ENCODE measurements at regions of chr1 and their contacts with region 1.

Region 1: GRCh38 chr1:239976130-239976968 is 115.3 kb upstream of the FMN2 start:
- DNase-seq: peak; percentile 62
- H3K4me3 Mint-ChIP-seq: no peak overlapping the region
- H3K27ac Mint-ChIP-seq: no peak overlapping the region
- H3K4me1 Mint-ChIP-seq: no peaks in the 10 kb centered on the region
- H3K27me3 Mint-ChIP-seq: peaks cover 2% of the 10 kb centered on the region

Region 2: GRCh38 chr1:238252033-238252802 is 1724.1 kb before region 1 on chr1:
- CTCF ChIA-PET with region 1: interaction called, 3 read pairs
- POLR2A ChIA-PET with region 1: no interaction called
- intact Hi-C with region 1: loop called (anchors 10 kb)
- DNase-seq: peak; percentile 40
- H3K4me3 Mint-ChIP-seq: no peak overlapping the region
- H3K27ac Mint-ChIP-seq: no peak overlapping the region
- H3K4me1 Mint-ChIP-seq: no peaks in the 10 kb centered on the region
- H3K27me3 Mint-ChIP-seq: no peaks in the 10 kb centered on the region

Region 3: DNA sequence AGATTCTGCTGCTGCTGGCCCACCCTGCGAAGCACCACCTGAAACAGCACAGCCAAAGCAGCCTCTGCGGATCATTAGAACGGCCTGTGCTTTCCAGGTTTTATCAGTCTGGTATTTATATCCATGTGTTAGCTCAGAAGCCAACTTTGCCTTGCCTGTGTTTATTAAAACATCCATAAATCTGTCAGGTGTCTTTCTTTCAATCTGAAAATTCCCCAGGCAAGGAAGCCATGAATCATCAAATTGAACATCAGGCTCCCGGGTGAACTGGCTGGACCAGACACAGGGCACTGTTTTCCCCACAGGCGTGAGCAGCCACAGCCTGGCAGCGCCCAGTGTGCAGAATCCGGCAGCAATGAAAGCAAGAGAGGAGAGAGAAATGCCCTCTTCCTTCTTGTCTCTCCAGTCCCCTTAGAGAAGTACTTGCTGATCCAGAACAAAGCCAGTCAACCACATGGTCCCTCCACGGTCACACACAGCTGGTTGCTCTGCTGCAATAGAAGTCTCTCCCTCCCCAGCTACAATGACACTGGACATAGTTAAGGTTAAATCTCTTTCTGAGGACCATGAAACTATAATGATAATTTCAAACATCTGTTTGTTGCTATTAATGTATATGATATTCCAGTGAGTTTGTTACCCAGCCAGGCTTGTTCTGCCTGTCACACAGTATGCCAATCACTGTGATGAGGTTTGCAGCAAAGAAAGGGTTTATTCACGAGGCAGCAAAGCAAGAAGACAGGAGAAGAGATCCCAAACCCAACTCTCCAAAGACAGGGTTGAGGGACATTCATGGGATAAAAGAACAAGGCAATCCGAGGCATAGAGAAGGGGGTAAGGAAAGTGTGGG is 96.8 kb before region 1 on chr1:
- CTCF ChIA-PET with region 1: no interaction called
- POLR2A ChIA-PET with region 1: no interaction called
- intact Hi-C with region 1: no loop called
- DNase-seq: no peak
- H3K4me3 Mint-ChIP-seq: no peak overlapping the region
- H3K27ac Mint-ChIP-seq: no peak overlapping the region
- H3K4me1 Mint-ChIP-seq: no peaks in the 10 kb centered on the region
- H3K27me3 Mint-ChIP-seq: no peaks in the 10 kb centered on the region